ENCODE measurements at regions of chr1 and their contacts with region 1.

Region 1: GRCh38 chr1:228902781-228903433 is 167.6 kb downstream of the RHOU start:
- DNase-seq: peak; percentile 10 to 90 (median 76)
- H3K4me3 ChIP-seq: peak overlapping the region in 14 of 59 donors; percentile 4 to 31 (median 15)
- H3K27ac ChIP-seq: peak overlapping the region in 57 of 59 donors; percentile 12 to 93 (median 81)
- H3K27me3 ChIP-seq: no peaks in the 10 kb centered on the region
- CTCF ChIP-seq: peak in 7 of 56 donors; percentile 6 to 24 (median 13)

Region 2: GRCh38 chr1:228751360-228752113 is 151.4 kb before region 1 on chr1:
- intact Hi-C with region 1: no loop called
- DNase-seq: no peak
- H3K4me3 ChIP-seq: no peak overlapping the region
- H3K27ac ChIP-seq: no peak overlapping the region
- H3K27me3 ChIP-seq: peaks cover 0 to 26% (median 0%) of the 10 kb centered on the region in 45 donors
- CTCF ChIP-seq: no peak

Region 3: GRCh38 chr1:228830954-228831481 is 71.9 kb before region 1 on chr1:
- intact Hi-C with region 1: loop called in 1 of 2 experiments (anchors 5 kb)
- DNase-seq: no peak
- H3K4me3 ChIP-seq: no peak overlapping the region
- H3K27ac ChIP-seq: peak overlapping the region in 7 of 59 donors; percentile 15 to 60 (median 45)
- H3K27me3 ChIP-seq: peaks cover 0 to 7% (median 0%) of the 10 kb centered on the region in 45 donors
- CTCF ChIP-seq: no peak

Region 4: DNA sequence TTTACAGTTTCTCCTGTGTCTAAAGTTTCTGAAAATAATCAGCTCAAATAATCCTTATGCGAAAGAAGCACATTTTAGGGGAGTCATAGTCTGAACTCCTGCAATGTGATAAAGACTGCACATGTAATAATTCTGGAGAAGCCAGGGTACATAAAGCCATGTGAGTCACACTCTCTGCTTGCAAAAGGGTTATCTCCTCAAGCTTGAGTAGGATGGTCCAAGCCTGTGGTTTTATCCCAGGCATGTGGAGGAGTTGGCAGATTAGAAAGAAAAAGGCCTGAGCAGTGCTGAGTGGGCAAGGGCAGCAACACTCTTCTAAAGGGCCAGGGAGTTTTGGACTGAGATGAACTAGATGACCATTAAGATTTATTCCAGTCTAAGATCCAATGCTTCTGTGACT is 52.8 kb after region 1 on chr1:
- intact Hi-C with region 1: loop called in 1 of 2 experiments (anchors 5 kb)
- DNase-seq: no peak
- H3K4me3 ChIP-seq: no peak overlapping the region
- H3K27ac ChIP-seq: peak overlapping the region in 1 of 59 donors; percentile 25
- H3K27me3 ChIP-seq: no peaks in the 10 kb centered on the region
- CTCF ChIP-seq: no peak

Measured in dorsolateral prefrontal cortex (tissue), 120 donors.